ENCODE measurements at regions of chr7 and their contacts with region 1.

Region 1: GRCh38 chr7:128919881-128920799 is 9.6 kb upstream of the KCP start:
- DNase-seq: peak; percentile 25
- H3K4me3 ChIP-seq: no peak overlapping the region
- H3K27ac ChIP-seq: no peak overlapping the region
- H3K4me1 ChIP-seq: peaks cover 0 to 5% of the 10 kb centered on the region in 2 experiments; a peak in 1 of 4 replicates
- H3K27me3 ChIP-seq: peaks cover 54% of the 10 kb centered on the region
- CTCF ChIP-seq: no peak
- EP300 ChIP-seq: no peak
- RAD21 ChIP-seq: no peak

Region 2: DNA sequence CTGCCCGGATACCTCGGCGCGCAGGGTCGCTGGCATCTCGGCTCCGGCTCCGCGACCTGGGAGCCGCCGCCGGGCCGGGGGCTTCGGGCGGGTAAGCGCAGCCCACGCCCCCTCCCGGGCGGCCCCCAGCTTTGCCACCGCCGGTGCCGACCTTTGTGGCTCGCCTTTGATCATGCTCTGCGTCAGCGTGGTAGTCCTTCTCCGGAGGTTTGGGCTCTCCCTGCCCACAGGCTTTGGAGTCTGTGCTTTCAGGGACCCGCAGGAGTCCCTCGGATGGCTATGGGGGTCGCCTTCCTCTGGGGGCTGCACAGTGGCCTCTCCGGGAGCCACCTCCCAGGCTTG is 50.2 kb before region 1 on chr7:
- CTCF ChIA-PET with region 1: no interaction called
- POLR2A ChIA-PET with region 1: no interaction called
- DNase-seq: no peak
- H3K4me3 ChIP-seq: peak overlapping the region; percentile 50 to 56; a peak in 3 of 4 replicates
- H3K27ac ChIP-seq: no peak overlapping the region
- H3K4me1 ChIP-seq: peaks cover 0 to 23% of the 10 kb centered on the region in 2 experiments; a peak in 1 of 4 replicates
- H3K27me3 ChIP-seq: no peaks in the 10 kb centered on the region
- CTCF ChIP-seq: no peak
- EP300 ChIP-seq: no peak
- RAD21 ChIP-seq: no peak

Region 3: DNA sequence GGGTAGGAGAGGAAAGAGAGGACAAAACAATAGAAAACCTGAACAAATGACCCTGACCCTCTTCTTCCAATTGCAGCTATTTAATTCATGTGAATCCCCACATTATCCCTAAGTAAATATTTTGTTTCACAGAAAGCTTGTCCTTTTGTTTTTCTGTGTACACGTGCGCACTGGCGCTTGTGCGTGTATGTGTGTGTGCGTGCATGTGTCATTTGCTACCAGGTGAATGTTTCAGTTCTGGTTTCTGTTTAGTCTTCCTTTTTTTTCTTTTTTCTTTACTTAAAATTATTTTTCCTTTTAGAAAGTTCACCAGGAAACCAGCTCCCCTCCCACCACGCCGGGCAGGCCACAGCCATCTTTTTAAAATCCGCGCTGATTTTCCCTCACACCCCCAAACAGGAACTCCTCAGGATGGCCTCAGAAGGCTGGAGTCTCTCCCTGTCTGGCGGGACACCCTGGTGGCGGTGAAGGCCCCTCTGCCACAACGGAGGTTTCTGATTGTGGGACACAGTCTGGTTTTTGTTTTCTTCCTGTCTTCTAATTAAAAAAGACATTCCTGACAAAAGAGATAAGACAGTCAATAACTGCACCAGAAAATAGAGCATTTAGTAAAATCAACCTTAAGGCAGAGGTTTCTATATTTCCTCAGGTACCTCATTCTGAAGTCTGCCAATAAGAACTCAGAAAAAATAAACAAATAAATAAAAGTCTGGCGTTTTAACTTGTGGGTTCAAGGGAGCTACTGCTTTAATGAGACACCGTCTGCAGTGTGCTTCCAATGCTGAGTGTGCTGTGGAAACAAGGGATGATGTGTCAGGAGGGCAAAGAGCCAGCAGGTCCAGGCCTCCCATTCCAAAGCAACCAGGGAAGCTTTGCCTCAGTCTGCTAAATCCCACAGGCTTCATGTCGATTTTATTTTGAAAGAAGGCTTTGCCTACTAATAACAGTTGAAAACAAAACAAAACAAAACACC is 35.0 kb after region 1 on chr7:
- CTCF ChIA-PET with region 1: interaction called, 14 read pairs
- POLR2A ChIA-PET with region 1: no interaction called
- DNase-seq: peak; percentile 86
- H3K4me3 ChIP-seq: no peak overlapping the region
- H3K27ac ChIP-seq: peak overlapping the region; percentile 35 to 93
- H3K4me1 ChIP-seq: peaks cover 5 to 52% of the 10 kb centered on the region in 2 experiments; a peak in 3 of 4 replicates
- H3K27me3 ChIP-seq: no peaks in the 10 kb centered on the region
- CTCF ChIP-seq: no peak; the same call in 1 of the 2 replicates
- EP300 ChIP-seq: peak in 1 of 2 experiments; percentile 89; a peak in 2 of 4 replicates
- RAD21 ChIP-seq: peak; percentile 63